ENCODE measurements at regions of chr2 and their contacts with region 1.

Region 1: GRCh38 chr2:171893824-171894611 is at the start of gene SLC25A12:
- DNase-seq: peak; percentile 94
- H3K4me3 Mint-ChIP-seq: peak within 1 kb of the TSS; percentile 95
- H3K27ac Mint-ChIP-seq: peak within 1 kb of the TSS; percentile 92
- H3K4me1 Mint-ChIP-seq: peaks cover 40% of the 10 kb centered on the region
- H3K27me3 Mint-ChIP-seq: peaks cover 2% of the 10 kb centered on the region
- total RNA-seq, gene SLC25A12: 30.9 and 34.3 TPM in 2 replicates

Region 2: GRCh38 chr2:171882089-171882769 is 11.8 kb before region 1 on chr2:
- intact Hi-C with region 1: loop called (anchors 1 kb)
- DNase-seq: peak; percentile 59
- H3K4me3 Mint-ChIP-seq: peak overlapping the region; percentile 46
- H3K27ac Mint-ChIP-seq: peak overlapping the region; percentile 75
- H3K4me1 Mint-ChIP-seq: peaks cover 28% of the 10 kb centered on the region
- H3K27me3 Mint-ChIP-seq: no peaks in the 10 kb centered on the region

Region 3: DNA sequence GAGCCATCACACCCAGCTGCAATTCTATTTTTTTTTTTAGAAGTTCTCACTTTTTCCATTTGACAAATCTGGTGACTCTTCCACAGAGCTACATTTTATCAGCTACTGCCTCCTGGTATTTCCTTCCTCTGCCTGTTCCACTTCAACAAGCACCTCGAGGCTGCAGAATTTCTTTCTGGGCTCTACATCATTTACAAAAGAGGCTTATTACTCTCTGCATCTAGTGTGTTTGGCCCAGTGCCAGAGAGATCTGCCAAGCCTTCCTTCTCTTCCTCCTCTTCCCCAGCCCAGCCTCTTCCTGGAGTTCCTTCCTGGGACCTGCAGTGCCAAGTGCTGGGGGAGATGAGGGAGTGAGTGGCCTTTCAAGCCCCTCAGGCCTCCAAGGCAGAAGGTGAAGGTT is 413.8 kb after region 1 on chr2:
- intact Hi-C with region 1: no loop called
- DNase-seq: no peak
- H3K4me3 Mint-ChIP-seq: no peak overlapping the region
- H3K27ac Mint-ChIP-seq: no peak overlapping the region
- H3K4me1 Mint-ChIP-seq: no peaks in the 10 kb centered on the region
- H3K27me3 Mint-ChIP-seq: peaks cover 3% of the 10 kb centered on the region

Measured in activated CD4-positive, alpha-beta T cell treated with anti-CD3 and anti-CD28 coated beads, Interleukin-2, amount 10 ng/mL, durations not matched to agents 24 days and 14 days (primary cell).